ENCODE measurements at regions of chr14 and their contacts with region 1.

Region 1: GRCh38 chr14:24058260-24058950 is 6.6 kb downstream of the CARMIL3 start:
- DNase-seq: peak; percentile 49 to 63 (median 61)
- H3K4me3 ChIP-seq: no peak overlapping the region
- H3K4me3 Mint-ChIP-seq: peak overlapping the region in 1 of 8 donors; percentile 59
- H3K27ac ChIP-seq: no peak overlapping the region
- H3K27ac Mint-ChIP-seq: peak overlapping the region in 6 of 7 donors; percentile 10 to 81 (median 36)
- H3K4me1 ChIP-seq: no peaks in the 10 kb centered on the region
- H3K4me1 Mint-ChIP-seq: peaks cover 2 to 8% (median 3%) of the 10 kb centered on the region in 4 donors
- H3K27me3 ChIP-seq: no peaks in the 10 kb centered on the region
- H3K27me3 Mint-ChIP-seq: peaks cover 2% of the 10 kb centered on the region in 2 donors

Region 2: GRCh38 chr14:24013654-24014514 is 44.5 kb before region 1 on chr14:
- CTCF ChIA-PET with region 1: interaction called, 5 read pairs
- POLR2A ChIA-PET with region 1: no interaction called
- intact Hi-C with region 1: loop called (anchors 1 kb)
- DNase-seq: peak; percentile 60 to 77 (median 70)
- H3K4me3 ChIP-seq: no peak overlapping the region
- H3K4me3 Mint-ChIP-seq: no peak overlapping the region
- H3K27ac ChIP-seq: no peak overlapping the region
- H3K27ac Mint-ChIP-seq: no peak overlapping the region
- H3K4me1 ChIP-seq: peaks cover 19% of the 10 kb centered on the region
- H3K4me1 Mint-ChIP-seq: peaks cover 19 to 27% (median 23%) of the 10 kb centered on the region in 4 donors
- H3K27me3 ChIP-seq: no peaks in the 10 kb centered on the region
- H3K27me3 Mint-ChIP-seq: peaks cover 0 to 3% of the 10 kb centered on the region in 2 donors

Region 3: DNA sequence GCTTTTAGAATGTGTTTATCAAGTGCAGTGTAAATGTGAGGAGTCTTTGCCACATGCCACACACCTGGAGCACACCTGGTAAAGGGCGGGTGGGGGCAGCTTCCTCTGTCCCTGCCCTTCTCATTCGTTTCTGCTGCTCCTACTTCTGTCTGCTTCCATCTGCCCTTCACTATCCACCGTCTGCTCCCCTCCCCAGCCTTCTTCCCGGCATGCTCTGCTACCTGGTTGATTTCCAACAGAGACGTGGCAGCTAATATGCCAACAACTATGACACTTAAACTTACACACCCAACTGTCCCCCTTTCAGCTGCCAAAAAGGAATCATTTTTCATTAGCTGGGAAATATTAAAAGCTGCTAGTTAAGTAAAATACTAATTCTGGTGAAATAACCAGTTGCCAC is 15.7 kb before region 1 on chr14:
- CTCF ChIA-PET with region 1: interaction called, 21 read pairs
- POLR2A ChIA-PET with region 1: no interaction called
- intact Hi-C with region 1: no loop called
- DNase-seq: no peak
- H3K4me3 ChIP-seq: no peak overlapping the region
- H3K4me3 Mint-ChIP-seq: no peak overlapping the region
- H3K27ac ChIP-seq: no peak overlapping the region
- H3K27ac Mint-ChIP-seq: no peak overlapping the region
- H3K4me1 ChIP-seq: no peaks in the 10 kb centered on the region
- H3K4me1 Mint-ChIP-seq: no peaks in the 10 kb centered on the region
- H3K27me3 ChIP-seq: no peaks in the 10 kb centered on the region
- H3K27me3 Mint-ChIP-seq: peaks cover 3 to 9% of the 10 kb centered on the region in 2 donors

Region 4: DNA sequence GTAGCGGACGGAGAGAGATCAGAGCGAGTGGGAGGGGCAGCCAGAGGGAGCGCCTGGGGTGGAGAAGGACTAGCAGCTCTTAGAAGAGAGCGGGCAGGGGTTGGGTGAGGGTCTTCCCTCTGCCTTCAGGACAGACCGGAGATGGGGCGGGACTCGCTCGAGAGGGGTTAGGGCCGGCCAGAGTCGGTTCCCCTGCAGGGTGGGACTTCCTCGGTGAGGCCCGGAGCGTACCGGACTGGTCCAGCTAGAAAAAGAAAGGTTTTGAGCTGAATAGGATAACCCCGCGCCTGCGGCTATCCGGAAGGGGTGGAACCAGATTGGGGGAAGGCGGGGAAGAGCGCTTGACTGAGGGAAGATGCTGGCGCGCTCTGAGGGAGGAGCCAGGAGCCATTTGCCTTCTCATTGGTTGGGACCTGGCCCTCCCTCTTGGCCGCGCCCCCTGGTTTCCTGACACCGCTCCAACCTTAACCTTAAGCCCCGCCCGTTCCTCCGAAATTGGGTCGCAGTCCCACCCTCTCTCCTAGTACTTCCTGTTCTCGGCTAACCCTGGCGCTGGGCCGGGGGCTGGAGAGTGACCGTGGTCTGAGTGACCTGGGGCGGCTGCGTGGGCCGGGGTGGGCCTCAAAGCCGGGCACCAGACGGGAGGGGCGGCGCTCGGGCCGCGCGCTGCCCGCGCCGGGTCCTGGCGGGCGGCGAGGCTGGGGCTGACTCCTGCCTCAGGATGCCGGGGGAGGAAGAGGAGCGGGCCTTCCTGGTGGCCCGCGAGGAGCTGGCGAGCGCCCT is 88.8 kb after region 1 on chr14 and contains the start of gene RNF31:
- CTCF ChIA-PET with region 1: interaction called, 8 read pairs
- POLR2A ChIA-PET with region 1: interaction called, 14 read pairs
- intact Hi-C with region 1: no loop called
- DNase-seq: peak; percentile 95 to 99 (median 97)
- H3K4me3 ChIP-seq: peak within 1 kb of the TSS; percentile 85 to 99
- H3K4me3 Mint-ChIP-seq: peak within 1 kb of the TSS; percentile 97 to 100 (median 98)
- H3K27ac ChIP-seq: peak within 1 kb of the TSS; percentile 92
- H3K27ac Mint-ChIP-seq: peak within 1 kb of the TSS; percentile 95 to 99 (median 98)
- H3K4me1 ChIP-seq: peaks cover 63% of the 10 kb centered on the region
- H3K4me1 Mint-ChIP-seq: peaks cover 32 to 80% (median 54%) of the 10 kb centered on the region in 4 donors
- H3K27me3 ChIP-seq: no peaks in the 10 kb centered on the region
- H3K27me3 Mint-ChIP-seq: no peaks in the 10 kb centered on the region
- total RNA-seq, gene RNF31: 108 to 113 TPM

Region 5: GRCh38 chr14:24188251-24189058 is 130.1 kb after region 1 on chr14 and contains the start of gene IPO4:
- CTCF ChIA-PET with region 1: no interaction called
- POLR2A ChIA-PET with region 1: no interaction called
- intact Hi-C with region 1: no loop called
- DNase-seq: peak; percentile 92 to 98 (median 95)
- H3K4me3 ChIP-seq: peak within 1 kb of the TSS; percentile 31 to 90
- H3K4me3 Mint-ChIP-seq: peak within 1 kb of the TSS; percentile 90 to 96 (median 93)
- H3K27ac ChIP-seq: peak within 1 kb of the TSS; percentile 80
- H3K27ac Mint-ChIP-seq: peak within 1 kb of the TSS; percentile 93 to 96 (median 96)
- H3K4me1 ChIP-seq: peaks cover 23% of the 10 kb centered on the region
- H3K4me1 Mint-ChIP-seq: peaks cover 20 to 56% (median 36%) of the 10 kb centered on the region in 4 donors
- H3K27me3 ChIP-seq: no peaks in the 10 kb centered on the region
- H3K27me3 Mint-ChIP-seq: no peaks in the 10 kb centered on the region
- total RNA-seq, gene IPO4: 22.4 to 30.2 TPM